ENCODE measurements at regions of chr17 and their contacts with region 1.

Region 1: DNA sequence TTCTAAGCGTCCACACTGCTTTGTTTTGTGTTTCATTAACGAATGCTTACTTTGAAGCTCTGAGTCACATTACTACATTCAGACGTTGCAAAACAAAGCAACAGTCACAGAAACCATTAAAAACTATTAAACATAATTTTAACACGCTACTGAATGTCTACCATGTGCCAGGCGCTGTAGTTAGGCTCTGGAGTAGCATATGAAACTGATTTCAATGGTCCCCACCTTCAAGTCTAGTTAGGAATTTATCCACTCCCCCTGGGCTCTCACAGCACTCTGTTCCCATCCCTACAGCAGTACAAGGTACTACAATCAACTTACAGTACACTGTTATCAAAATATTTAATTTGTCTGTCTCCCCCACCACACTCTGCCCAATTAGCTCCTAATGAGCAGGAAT is 631 bp downstream of the UTP6 start:
- DNase-seq: no peak
- H3K4me3 ChIP-seq: peak overlapping the region; percentile 76 to 78
- H3K27ac ChIP-seq: peak overlapping the region; percentile 70 to 78
- H3K4me1 ChIP-seq: peaks cover 0 to 22% (median 12%) of the 10 kb centered on the region in 4 donors
- H3K27me3 ChIP-seq: no peaks in the 10 kb centered on the region
- CTCF ChIP-seq: no peak

Region 2: GRCh38 chr17:31743797-31744196 is 157.1 kb before region 1 on chr17:
- intact Hi-C with region 1: no loop called
- DNase-seq: no peak
- H3K4me3 ChIP-seq: no peak overlapping the region
- H3K27ac ChIP-seq: peak overlapping the region; percentile 67 to 68
- H3K4me1 ChIP-seq: peaks cover 0 to 83% (median 45%) of the 10 kb centered on the region in 4 donors
- H3K27me3 ChIP-seq: no peaks in the 10 kb centered on the region
- CTCF ChIP-seq: no peak

Region 3: GRCh38 chr17:31858642-31859473 is 42.0 kb before region 1 on chr17 and contains the start of gene COPRS:
- intact Hi-C with region 1: loop called (anchors 5 kb)
- DNase-seq: peak; percentile 83 to 95
- H3K4me3 ChIP-seq: peak within 1 kb of the TSS; percentile 57 to 95
- H3K27ac ChIP-seq: peak within 1 kb of the TSS; percentile 73 to 94
- H3K4me1 ChIP-seq: peaks cover 0 to 30% (median 16%) of the 10 kb centered on the region in 4 donors
- H3K27me3 ChIP-seq: no peaks in the 10 kb centered on the region
- CTCF ChIP-seq: no peak

Region 4: GRCh38 chr17:31967648-31968047 is 66.8 kb after region 1 on chr17:
- intact Hi-C with region 1: no loop called
- DNase-seq: no peak
- H3K4me3 ChIP-seq: no peak overlapping the region
- H3K27ac ChIP-seq: no peak overlapping the region
- H3K4me1 ChIP-seq: no peaks in the 10 kb centered on the region
- H3K27me3 ChIP-seq: no peaks in the 10 kb centered on the region
- CTCF ChIP-seq: no peak

Region 5: DNA sequence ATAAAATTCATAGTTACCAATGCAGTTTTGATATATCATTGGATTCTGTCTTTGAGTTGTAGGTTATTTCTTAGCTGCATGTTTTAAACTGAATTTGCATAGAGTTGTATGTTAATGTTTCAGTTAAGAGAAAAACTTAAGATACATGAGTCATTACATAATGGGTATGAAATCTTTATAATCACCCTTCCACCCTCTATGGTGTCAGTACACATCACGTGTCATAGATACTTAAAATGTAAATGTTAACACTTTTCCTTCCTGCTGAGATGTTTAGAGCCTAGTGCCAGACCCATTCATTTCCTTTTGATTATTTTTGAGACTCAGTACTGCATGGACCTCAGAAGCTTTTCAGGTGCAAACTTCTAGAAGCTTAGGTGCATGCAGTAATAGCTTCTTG is 469.5 kb after region 1 on chr17:
- intact Hi-C with region 1: no loop called
- DNase-seq: no peak
- H3K4me3 ChIP-seq: no peak overlapping the region
- H3K27ac ChIP-seq: no peak overlapping the region
- H3K4me1 ChIP-seq: no peaks in the 10 kb centered on the region
- H3K27me3 ChIP-seq: no peaks in the 10 kb centered on the region
- CTCF ChIP-seq: no peak